Ovary (tissue), 10 donors: ENCODE measurements at regions of chr7 and their contacts with region 1.

Region 1: DNA sequence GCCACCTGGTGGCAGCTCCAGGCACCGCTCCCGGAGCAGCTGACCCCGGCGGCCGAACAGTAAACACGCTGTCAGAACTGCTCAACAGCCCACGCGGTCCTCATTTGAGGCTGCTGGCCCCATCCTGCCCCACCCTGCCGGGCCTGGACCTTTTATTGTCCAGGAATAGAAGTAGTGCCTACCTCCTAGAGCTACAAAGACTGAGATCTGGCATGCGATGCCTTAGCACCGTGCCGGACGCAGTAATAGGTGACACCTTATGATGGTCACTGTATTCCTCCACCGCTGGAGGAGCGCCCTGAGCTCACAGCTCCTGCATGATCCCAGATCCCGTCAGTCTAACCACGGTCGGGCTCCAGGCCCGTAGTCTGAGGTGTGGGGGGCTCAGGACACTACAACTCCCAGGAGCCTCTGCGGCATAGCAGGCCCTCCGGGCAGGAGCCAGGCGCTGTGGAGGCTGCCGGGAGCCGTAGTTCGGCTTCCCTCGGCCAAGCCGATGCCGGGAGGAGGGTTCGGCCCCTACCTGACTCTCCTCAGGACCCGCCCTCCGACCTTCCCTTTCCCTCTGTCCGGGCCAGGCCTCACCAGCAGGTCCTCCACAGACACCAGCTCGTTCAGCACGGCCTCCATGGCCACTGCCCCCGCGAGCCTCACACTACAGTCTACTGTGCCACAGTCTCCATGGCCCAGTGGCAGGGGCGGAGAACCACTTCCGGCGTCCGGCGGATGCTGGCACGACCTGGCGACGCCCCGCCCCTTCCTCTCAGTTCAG is at the start of gene FIS1:
- DNase-seq: peak; percentile 92 to 96 (median 92)
- H3K4me3 ChIP-seq: peak within 1 kb of the TSS; percentile 82
- H3K27ac ChIP-seq: peak within 1 kb of the TSS; percentile 81 to 88
- H3K4me1 ChIP-seq: peaks cover 5% of the 10 kb centered on the region
- H3K27me3 ChIP-seq: no peaks in the 10 kb centered on the region
- CTCF ChIP-seq: peak in 2 of 3 donors; percentile 77 to 90
- EP300 ChIP-seq: no peak
- POLR2A ChIP-seq: peak; percentile 89
- total RNA-seq, gene FIS1: 146 to 262 (median 178) TPM

Region 2: DNA sequence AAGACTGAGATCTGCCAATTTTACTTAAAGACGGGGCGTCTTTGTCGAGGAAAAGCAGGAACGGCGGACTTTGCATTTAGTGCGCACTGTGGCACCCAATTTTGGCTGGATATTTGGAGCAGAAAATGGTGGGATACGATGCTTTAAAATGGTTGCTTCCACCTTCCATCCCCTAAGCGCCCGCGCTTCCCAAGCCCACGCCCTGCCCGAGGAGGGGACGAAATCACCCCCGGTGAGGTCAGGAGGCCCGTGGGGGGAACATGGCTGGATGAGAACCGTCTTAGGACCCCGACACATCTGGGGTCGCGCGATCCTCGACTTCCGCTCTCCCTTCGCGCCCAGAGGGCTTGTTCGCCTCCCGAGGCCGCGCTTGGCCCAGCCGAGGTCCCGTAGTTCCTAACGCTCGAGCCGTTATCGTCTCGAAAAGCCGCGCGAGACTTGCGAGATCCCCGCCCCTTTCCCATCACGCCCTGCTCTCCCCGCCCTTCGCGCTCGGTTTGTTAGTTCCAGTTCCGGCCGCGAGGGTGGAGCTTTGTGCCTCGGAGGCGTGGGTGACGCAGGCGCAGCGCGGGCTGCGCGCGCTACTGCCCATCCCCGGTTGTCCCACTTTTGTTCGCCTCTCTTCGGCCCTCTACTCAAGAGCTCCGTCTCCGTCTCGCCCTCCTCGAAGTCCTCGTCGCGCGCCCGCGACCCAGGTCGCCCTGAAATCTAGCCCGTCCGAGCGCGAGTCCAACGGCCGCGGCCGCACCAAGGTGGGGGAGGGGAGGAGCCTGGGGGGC is 369.8 kb before region 1 on chr7 and contains the start of gene SRRT:
- intact Hi-C with region 1: loop called in 1 of 4 experiments (anchors 10 kb)
- DNase-seq: peak; percentile 98 to 99 (median 99)
- H3K4me3 ChIP-seq: peak within 1 kb of the TSS; percentile 88
- H3K27ac ChIP-seq: peak within 1 kb of the TSS; percentile 90 to 93
- H3K4me1 ChIP-seq: peaks cover 6% of the 10 kb centered on the region
- H3K27me3 ChIP-seq: no peaks in the 10 kb centered on the region
- CTCF ChIP-seq: peak; percentile 49 to 90 (median 86)
- EP300 ChIP-seq: no peak
- POLR2A ChIP-seq: peak; percentile 98
- total RNA-seq, gene SRRT: 74.2 to 191 (median 149) TPM